Activated B cell treated with CpG ODN at 0.5 μM for 24 hours (primary cell): ENCODE measurements at regions of chr9 and their contacts with region 1.

Region 1: DNA sequence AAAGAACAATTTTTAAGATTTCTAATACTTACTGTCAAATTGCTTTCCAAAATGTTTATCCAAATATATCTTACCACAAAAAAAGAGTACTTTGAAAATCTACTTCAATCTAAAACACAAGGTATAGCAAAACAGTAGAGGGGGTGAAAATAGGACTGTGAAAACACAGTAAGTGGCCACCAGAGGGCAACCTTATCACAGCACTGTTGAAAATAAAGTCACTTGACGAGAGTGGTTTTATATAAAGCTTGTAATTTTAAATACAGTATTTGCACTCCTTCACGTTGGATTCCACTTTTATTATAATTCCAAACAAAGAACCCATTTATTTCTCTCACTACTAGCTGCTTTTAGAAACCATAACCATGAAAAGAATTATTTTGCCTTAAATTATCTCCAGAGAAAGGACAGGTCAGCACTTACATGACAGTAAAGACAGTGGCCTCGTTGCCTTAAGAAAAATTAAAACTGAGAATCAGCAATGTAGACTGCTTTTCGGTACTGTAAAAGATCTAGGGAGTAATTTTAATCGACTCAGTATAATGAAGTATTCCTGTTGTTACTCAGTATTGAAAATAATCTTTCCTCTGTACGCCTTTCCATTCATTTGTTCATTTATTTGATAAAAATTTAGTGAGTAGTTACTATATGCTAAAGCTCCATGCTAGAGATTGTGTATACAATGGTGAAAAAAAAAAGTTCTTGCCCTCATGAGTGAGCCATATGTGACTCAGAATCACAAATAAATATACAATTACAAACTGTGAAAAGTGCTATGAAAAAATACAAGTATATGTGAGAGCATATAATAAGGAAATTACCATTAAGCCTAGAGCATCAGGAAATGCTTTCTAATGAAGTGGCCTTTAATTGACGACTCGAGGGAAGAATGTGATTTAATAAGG is 40.0 kb upstream of the CDK5RAP2 start:
- DNase-seq: no peak
- ATAC-seq: peak; percentile 79
- H3K4me3 Mint-ChIP-seq: no peak overlapping the region
- H3K27ac Mint-ChIP-seq: no peak overlapping the region
- H3K4me1 Mint-ChIP-seq: peaks cover 2% of the 10 kb centered on the region
- H3K27me3 Mint-ChIP-seq: no peaks in the 10 kb centered on the region
- CTCF ChIP-seq: peak; percentile 99

Region 2: GRCh38 chr9:120733190-120733589 is 113.2 kb after region 1 on chr9:
- CTCF ChIA-PET with region 1: interaction called, 4 read pairs
- POLR2A ChIA-PET with region 1: interaction called, 10 read pairs
- intact Hi-C with region 1: no loop called
- DNase-seq: no peak
- ATAC-seq: no peak
- H3K4me3 Mint-ChIP-seq: no peak overlapping the region
- H3K27ac Mint-ChIP-seq: no peak overlapping the region
- H3K4me1 Mint-ChIP-seq: peaks cover 22% of the 10 kb centered on the region
- H3K27me3 Mint-ChIP-seq: no peaks in the 10 kb centered on the region
- CTCF ChIP-seq: no peak

Region 3: GRCh38 chr9:120742951-120743416 is 123.0 kb after region 1 on chr9:
- CTCF ChIA-PET with region 1: no interaction called
- POLR2A ChIA-PET with region 1: no interaction called
- intact Hi-C with region 1: loop called (anchors 5 kb)
- DNase-seq: no peak
- ATAC-seq: peak; percentile 62
- H3K4me3 Mint-ChIP-seq: no peak overlapping the region
- H3K27ac Mint-ChIP-seq: no peak overlapping the region
- H3K4me1 Mint-ChIP-seq: no peaks in the 10 kb centered on the region
- H3K27me3 Mint-ChIP-seq: no peaks in the 10 kb centered on the region
- CTCF ChIP-seq: no peak

Region 4: GRCh38 chr9:120801441-120801840 is 181.4 kb after region 1 on chr9:
- CTCF ChIA-PET with region 1: no interaction called
- POLR2A ChIA-PET with region 1: no interaction called
- intact Hi-C with region 1: no loop called
- DNase-seq: no peak
- ATAC-seq: no peak
- H3K4me3 Mint-ChIP-seq: no peak overlapping the region
- H3K27ac Mint-ChIP-seq: no peak overlapping the region
- H3K4me1 Mint-ChIP-seq: no peaks in the 10 kb centered on the region
- H3K27me3 Mint-ChIP-seq: no peaks in the 10 kb centered on the region
- CTCF ChIP-seq: no peak

Region 5: GRCh38 chr9:121059998-121060636 is 440.1 kb after region 1 on chr9:
- CTCF ChIA-PET with region 1: interaction called, 4 read pairs
- POLR2A ChIA-PET with region 1: no interaction called
- intact Hi-C with region 1: loop called (anchors 1 kb)
- DNase-seq: no peak
- ATAC-seq: peak; percentile 67
- H3K4me3 Mint-ChIP-seq: no peak overlapping the region
- H3K27ac Mint-ChIP-seq: no peak overlapping the region
- H3K4me1 Mint-ChIP-seq: peaks cover 5% of the 10 kb centered on the region
- H3K27me3 Mint-ChIP-seq: no peaks in the 10 kb centered on the region
- CTCF ChIP-seq: peak; percentile 56